ENCODE measurements at regions of chr2 and their contacts with region 1.

Region 1: DNA sequence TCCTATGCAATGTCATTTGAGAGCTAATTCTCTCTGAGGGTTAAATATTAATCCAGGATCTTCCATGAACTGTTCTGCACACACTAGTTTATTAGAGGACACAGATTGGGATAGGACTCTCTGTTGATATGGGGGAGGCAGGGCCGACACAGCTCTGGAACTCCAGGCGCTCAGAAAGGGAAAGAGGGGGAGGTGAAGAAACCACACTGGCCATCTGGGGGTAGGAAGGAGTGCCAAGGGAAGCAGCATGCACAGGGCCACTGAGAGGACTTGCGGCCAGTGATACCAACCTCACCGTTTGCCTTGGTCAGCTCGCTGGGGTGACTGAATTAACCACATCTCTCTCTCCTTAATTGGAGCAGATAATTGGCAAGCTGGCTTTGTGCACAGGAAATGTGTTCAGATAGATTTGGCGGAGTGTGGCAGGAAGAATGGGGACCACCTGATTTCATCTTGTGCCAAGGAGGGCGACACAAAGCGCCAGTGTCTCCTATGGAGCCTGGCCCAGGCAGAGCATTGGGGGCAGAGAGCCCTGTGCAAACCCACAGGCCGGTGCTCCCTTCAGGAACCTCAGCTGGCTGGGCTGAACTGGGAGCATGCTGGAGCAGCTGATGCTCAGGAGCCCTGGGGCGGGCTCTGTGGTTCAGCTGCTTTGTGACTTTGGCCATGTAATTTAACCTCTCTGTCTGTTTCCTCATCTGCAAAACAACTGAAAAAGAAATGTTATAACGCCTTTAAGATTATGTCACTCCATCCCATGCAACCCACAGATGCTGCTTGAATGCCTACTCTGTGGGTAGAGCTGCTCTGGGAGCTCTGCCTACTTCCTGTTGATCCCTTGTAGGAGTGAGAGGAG is 114.7 kb upstream of the STON1 start:
- DNase-seq: no peak
- ATAC-seq: no peak
- H3K4me3 ChIP-seq: no peak overlapping the region
- H3K27ac ChIP-seq: no peak overlapping the region
- H3K4me1 ChIP-seq: peaks cover 2% of the 10 kb centered on the region; the same call in 1 of the 2 replicates
- H3K27me3 ChIP-seq: no peaks in the 10 kb centered on the region
- CTCF ChIP-seq: no peak
- POLR2A ChIP-seq: no peak
- RAD21 ChIP-seq: no peak

Region 2: DNA sequence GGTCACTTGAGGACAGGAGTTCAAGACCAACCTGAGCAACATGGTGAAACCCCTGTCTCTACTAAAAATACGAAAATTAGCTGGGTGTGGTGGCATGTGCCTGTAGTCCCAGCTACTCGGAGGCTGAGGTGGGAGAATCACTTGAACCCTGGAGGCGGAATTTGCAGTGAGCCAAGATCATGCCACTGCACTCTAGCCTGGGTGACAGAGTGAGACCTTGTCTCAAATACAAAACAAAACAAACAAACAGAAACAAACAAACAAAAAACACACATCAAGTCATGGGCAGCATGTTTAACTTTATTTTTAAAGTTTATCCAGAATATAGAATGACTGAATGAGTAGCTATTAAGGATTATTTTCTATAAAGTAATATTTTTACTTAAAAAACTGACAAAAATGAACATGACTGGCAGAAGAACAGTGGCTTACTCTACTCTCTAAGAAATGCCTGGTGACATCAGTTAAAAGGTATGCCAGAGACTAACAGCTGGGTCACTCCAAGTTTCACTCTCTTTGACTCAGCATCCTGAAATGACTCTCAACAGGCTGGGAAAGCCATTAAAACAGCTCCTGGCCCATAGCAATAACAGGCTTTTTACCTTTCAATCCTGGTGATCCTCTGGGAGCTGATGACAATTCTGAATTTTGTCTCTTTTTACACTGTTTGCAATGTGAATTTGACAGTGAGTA is 166.8 kb before region 1 on chr2:
- CTCF ChIA-PET with region 1: no interaction called
- POLR2A ChIA-PET with region 1: no interaction called
- dilution Hi-C with region 1: no loop called
- in situ Hi-C with region 1: no loop called
- intact Hi-C with region 1: loop called (anchors 5 kb)
- DNase-seq: peak; percentile 94
- ATAC-seq: peak; percentile 92
- H3K4me3 ChIP-seq: no peak overlapping the region
- H3K27ac ChIP-seq: peak overlapping the region; percentile 94
- H3K4me1 ChIP-seq: peaks cover 9% of the 10 kb centered on the region
- H3K27me3 ChIP-seq: no peaks in the 10 kb centered on the region
- CTCF ChIP-seq: no peak
- POLR2A ChIP-seq: no peak
- RAD21 ChIP-seq: no peak

Region 3: GRCh38 chr2:48727565-48727964 is 312.4 kb after region 1 on chr2:
- CTCF ChIA-PET with region 1: no interaction called
- POLR2A ChIA-PET with region 1: no interaction called
- dilution Hi-C with region 1: no loop called
- in situ Hi-C with region 1: no loop called
- intact Hi-C with region 1: no loop called
- DNase-seq: no peak
- ATAC-seq: no peak
- H3K4me3 ChIP-seq: no peak overlapping the region
- H3K27ac ChIP-seq: no peak overlapping the region
- H3K4me1 ChIP-seq: peaks cover 11% of the 10 kb centered on the region
- H3K27me3 ChIP-seq: no peaks in the 10 kb centered on the region
- CTCF ChIP-seq: no peak
- POLR2A ChIP-seq: no peak
- RAD21 ChIP-seq: no peak

Measured in IMR-90 (cell line).